ENCODE measurements at regions of chr19 and their contacts with region 1.

Region 1: DNA sequence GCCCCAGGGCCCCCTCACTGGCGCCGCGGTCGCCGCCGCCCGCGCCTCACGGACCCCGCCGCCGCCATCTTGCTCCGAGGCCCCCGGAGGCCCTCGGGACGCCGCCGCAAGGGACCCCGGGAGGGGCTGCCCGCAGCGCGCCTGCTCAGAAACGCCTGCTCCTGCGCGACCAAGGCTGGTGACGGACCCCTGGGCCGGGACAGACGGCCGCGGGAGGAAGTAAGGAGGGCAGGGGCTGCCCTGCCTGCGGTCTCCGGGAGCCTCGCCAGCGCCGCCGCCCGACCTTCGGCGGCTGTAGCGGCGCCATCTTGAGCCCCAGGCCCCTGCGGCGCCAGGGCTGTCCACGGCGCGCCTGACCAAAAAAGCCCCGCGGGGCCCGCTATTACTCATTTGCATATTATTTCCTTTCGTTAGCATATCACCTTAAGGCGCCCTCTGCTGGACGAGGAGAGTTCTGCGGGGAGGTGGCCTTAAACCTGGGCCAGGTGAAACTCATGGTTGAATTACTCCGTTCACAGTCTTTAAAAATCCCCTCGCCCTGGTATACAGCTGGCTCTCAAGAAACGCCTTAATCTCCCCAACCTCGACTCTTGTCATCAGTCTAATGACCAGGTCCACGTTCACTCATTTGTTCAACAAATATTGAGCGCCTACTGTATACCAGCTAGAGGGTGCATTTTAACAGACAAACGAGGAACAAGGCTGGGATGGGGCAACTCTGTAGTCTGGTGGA is at the start of gene REXO1:
- DNase-seq: peak; percentile 99
- H3K4me3 Mint-ChIP-seq: peak within 1 kb of the TSS; percentile 91
- H3K27ac Mint-ChIP-seq: peak within 1 kb of the TSS; percentile 89
- H3K4me1 Mint-ChIP-seq: peaks cover 41% of the 10 kb centered on the region
- H3K27me3 Mint-ChIP-seq: no peaks in the 10 kb centered on the region
- total RNA-seq, gene REXO1: 56.3 and 61.4 TPM in 2 replicates

Region 2: GRCh38 chr19:1718420-1719291 is 129.9 kb before region 1 on chr19:
- intact Hi-C with region 1: no loop called
- DNase-seq: no peak
- H3K4me3 Mint-ChIP-seq: no peak overlapping the region
- H3K27ac Mint-ChIP-seq: no peak overlapping the region
- H3K4me1 Mint-ChIP-seq: no peaks in the 10 kb centered on the region
- H3K27me3 Mint-ChIP-seq: peaks cover 44% of the 10 kb centered on the region

Region 3: GRCh38 chr19:1812469-1813196 is 35.9 kb before region 1 on chr19:
- intact Hi-C with region 1: loop called (anchors 1 kb)
- DNase-seq: peak; percentile 98
- H3K4me3 Mint-ChIP-seq: peak overlapping the region; percentile 93
- H3K27ac Mint-ChIP-seq: peak overlapping the region; percentile 94
- H3K4me1 Mint-ChIP-seq: peaks cover 13% of the 10 kb centered on the region
- H3K27me3 Mint-ChIP-seq: no peaks in the 10 kb centered on the region

Region 4: GRCh38 chr19:1863726-1864480 is 15.3 kb after region 1 on chr19:
- intact Hi-C with region 1: no loop called
- DNase-seq: peak; percentile 98
- H3K4me3 Mint-ChIP-seq: peak overlapping the region; percentile 83
- H3K27ac Mint-ChIP-seq: peak overlapping the region; percentile 89
- H3K4me1 Mint-ChIP-seq: peaks cover 17% of the 10 kb centered on the region
- H3K27me3 Mint-ChIP-seq: no peaks in the 10 kb centered on the region